ENCODE measurements at regions of chr15 and their contacts with region 1.

Region 1: DNA sequence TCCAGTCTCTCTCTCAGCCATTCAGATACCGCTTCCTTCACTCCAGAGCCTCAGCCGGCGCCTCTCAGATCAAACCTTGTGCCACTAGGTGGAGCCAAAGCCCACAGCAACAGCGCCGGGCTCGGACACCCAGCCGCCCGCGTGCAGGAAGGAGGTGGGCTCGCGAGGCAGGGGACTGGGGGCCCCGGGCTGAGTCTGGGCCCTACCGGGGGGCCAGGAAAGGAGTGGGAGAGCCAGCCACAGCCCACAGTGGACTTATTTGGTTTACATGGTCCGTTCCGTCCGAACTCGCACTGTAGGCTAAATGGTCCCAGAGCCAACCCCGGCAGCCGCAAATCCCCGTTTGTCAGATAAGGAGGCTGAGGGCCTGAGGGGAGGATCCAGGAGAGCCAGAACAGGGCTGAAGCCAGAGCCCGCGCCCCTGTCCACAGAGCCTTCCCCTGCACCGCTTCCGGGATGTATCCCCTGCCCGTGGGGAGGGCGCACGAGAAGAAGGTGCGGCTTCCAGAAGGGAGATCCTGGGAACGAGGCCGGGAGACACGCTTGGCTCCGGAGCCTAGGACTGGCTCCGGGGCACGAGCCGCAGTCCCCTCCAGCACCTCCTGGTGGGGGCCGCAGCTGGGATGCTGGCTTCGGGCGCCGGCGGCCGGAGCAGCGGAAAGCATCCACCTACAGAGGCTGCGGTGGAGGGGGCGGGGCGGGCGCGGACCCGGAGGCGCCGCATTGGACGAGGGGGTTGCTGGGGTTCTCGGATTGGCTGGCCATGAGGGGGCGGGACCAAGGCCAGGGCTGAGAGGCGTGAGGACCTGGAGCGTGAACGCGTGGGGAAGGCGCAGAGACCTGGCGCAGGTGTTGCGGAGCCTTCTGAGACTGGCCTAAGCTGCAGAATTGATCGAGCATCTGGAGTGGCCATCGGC is 6.5 kb upstream of the CYP11A1 start:
- DNase-seq: peak; percentile 77

Region 2: DNA sequence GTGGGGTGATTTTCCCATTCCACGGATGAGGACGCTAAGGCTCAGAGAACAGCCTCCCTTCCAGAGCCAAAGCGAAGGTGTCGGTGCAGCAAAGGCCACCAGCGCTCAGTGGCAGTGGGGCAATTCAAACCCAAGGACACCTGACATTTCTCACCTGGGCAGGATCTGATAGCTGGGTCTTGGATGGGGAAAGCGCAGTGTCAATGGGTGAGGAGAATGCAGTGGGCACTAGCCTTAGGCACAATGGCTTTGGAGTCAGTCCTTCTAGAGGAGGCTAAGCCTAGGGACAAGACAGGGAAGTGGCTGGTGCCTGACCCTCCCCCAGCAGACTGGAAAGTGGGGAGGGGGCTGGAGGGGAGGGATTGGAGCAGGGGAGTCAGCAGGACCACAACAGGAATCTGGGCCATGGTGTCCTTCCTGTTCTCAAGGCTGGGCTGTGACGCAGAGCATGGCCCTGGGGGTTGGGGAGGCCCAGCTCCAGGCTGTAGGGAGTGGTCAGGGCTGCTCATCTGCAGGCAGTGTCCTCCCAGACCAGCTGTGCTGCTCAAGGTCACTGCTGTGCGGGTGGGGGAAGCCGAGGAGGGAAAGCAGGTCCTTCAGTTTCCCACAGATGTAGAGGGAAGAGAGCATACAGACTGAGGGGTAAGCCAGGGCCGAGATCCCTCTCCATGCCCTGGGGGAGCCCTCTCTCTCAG is 47.4 kb before region 1 on chr15:
- in situ Hi-C with region 1: no loop called
- DNase-seq: no peak

Region 3: DNA sequence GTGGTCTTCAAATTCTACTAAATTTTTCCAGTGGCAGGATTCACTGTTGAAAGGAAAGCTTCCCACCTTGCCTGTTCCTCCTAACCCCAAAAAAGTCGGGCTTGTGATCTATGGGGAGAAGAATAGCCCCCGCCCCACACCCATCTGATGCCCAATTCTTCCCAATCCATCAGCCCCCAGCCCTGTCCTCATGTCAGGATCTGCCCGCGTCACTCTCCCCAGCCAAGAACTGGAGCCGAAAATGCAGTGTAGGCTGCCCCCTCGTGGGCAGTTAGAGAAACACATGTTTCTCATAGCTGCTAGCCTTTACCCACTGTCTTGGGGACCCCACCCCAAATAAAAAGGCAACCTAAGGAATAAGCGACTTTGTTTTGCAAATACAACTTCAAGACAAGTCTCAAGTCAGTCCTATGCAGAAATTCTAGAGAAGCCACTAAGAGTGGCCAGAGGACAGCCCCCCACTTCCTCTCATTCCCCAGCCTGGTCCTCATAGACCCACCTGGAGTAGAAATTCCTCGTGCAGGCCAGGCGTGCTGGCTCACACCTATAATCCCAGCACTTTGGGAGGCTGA is 394.9 kb after region 1 on chr15:
- in situ Hi-C with region 1: loop called (anchors 25 kb)
- DNase-seq: peak; percentile 48